GM12878 (cell line): ENCODE measurements at regions of chr11 and their contacts with region 1.

Region 1: GRCh38 chr11:22221143-22221542 is 28.3 kb downstream of the ANO5 start:
- DNase-seq: no peak
- ATAC-seq: peak; percentile 63
- H3K4me3 ChIP-seq: no peak overlapping the region
- H3K27ac ChIP-seq: no peak overlapping the region
- H3K4me1 ChIP-seq: no peaks in the 10 kb centered on the region
- H3K27me3 ChIP-seq: no peaks in the 10 kb centered on the region
- CTCF ChIP-seq: no peak
- EP300 ChIP-seq: no peak
- POLR2A ChIP-seq: no peak
- RAD21 ChIP-seq: no peak

Region 2: GRCh38 chr11:22084056-22084455 is 137.1 kb before region 1 on chr11:
- CTCF ChIA-PET with region 1: no interaction called
- POLR2A ChIA-PET with region 1: no interaction called
- RAD21 ChIA-PET with region 1: no interaction called
- SMC1A ChIA-PET with region 1: no interaction called
- in situ Hi-C with region 1: no loop called
- intact Hi-C with region 1: no loop called
- DNase-seq: no peak
- ATAC-seq: no peak
- H3K4me3 ChIP-seq: no peak overlapping the region
- H3K27ac ChIP-seq: no peak overlapping the region
- H3K4me1 ChIP-seq: no peaks in the 10 kb centered on the region
- H3K27me3 ChIP-seq: no peaks in the 10 kb centered on the region
- CTCF ChIP-seq: no peak
- EP300 ChIP-seq: no peak
- POLR2A ChIP-seq: no peak
- RAD21 ChIP-seq: no peak

Region 3: GRCh38 chr11:22203281-22203680 is 17.9 kb before region 1 on chr11:
- CTCF ChIA-PET with region 1: interaction called, 8 read pairs
- POLR2A ChIA-PET with region 1: no interaction called
- RAD21 ChIA-PET with region 1: interaction called, 4 read pairs
- SMC1A ChIA-PET with region 1: interaction called, 22 read pairs
- in situ Hi-C with region 1: no loop called
- intact Hi-C with region 1: no loop called
- DNase-seq: no peak
- ATAC-seq: peak; percentile 91
- H3K4me3 ChIP-seq: no peak overlapping the region
- H3K27ac ChIP-seq: no peak overlapping the region
- H3K4me1 ChIP-seq: no peaks in the 10 kb centered on the region
- H3K27me3 ChIP-seq: no peaks in the 10 kb centered on the region
- CTCF ChIP-seq: no peak
- EP300 ChIP-seq: peak in 1 of 2 experiments; percentile 29; a peak in 1 of 4 replicates
- POLR2A ChIP-seq: no peak
- RAD21 ChIP-seq: no peak